Activated T-helper 2 cell treated with anti-CD3 and anti-CD28 coated beads, Interferon-gamma antibody, Interleukin-2, Interleukin-4, amounts not matched to agents 10 μg/mL and 5 μg/mL and 100 μg/mL, durations not matched to agents 14 hours and 24 hours and 36 hours (primary cell): ENCODE measurements at regions of chr4 and their contacts with region 1.

Region 1: GRCh38 chr4:159102622-159103383 is at the start of gene RAPGEF2:
- DNase-seq: peak; percentile 84
- H3K4me3 Mint-ChIP-seq: peak within 1 kb of the TSS; percentile 82
- H3K27ac Mint-ChIP-seq: peak within 1 kb of the TSS; percentile 78
- H3K4me1 Mint-ChIP-seq: peaks cover 53% of the 10 kb centered on the region
- H3K27me3 Mint-ChIP-seq: peaks cover 21% of the 10 kb centered on the region
- total RNA-seq, gene RAPGEF2: 17.0 TPM in 2 replicates

Region 2: GRCh38 chr4:158671915-158672806 is 430.6 kb before region 1 on chr4 and contains the start of gene ETFDH:
- intact Hi-C with region 1: loop called (anchors 1 kb)
- DNase-seq: peak; percentile 98
- H3K4me3 Mint-ChIP-seq: peak within 1 kb of the TSS; percentile 98
- H3K27ac Mint-ChIP-seq: peak within 1 kb of the TSS; percentile 95
- H3K4me1 Mint-ChIP-seq: peaks cover 25% of the 10 kb centered on the region
- H3K27me3 Mint-ChIP-seq: no peaks in the 10 kb centered on the region
- total RNA-seq, gene ETFDH: 21.6 and 23.8 TPM in 2 replicates

Region 3: DNA sequence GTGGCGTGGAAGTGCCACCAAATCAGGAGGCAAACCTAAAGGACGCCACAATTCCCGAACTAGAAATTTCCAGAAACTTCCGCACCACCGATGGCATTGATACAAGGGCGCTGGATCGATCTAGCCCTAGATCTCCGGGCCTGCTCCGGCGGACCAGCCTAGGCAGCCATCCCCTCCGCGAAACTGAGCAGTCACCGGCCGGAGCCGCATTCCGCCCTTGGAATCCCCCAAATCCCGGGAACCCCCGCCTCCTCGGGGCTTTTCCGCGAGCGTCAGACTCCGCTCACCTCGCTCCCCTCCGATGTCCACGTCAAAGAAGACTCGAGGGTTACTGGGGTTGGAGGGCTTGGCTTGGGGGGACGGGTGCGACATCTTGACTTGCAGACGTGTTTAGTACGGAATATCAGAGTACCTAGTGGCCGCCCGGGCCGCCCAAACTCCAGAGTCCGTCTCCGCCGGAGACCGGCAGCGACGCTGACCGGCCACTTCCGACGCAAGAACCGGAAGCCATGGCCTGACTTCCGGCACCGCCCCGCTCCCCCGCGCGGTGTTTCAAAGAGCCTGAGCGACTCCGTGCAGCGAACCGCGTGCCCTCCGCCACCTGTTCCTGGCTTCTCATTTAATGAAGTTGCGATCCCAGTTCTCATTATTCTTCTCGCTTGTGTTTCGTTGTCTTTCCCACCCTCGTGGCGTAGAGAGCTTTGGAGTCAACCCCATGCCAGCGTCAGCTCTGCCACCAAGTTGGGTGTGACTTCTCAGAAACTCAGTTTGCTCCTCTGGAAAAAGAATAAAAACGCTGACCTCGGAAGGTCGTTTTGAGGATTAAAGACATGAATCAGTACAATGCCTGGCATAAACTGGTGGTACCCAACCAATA is 379.6 kb before region 1 on chr4 and contains the start of gene PPID:
- intact Hi-C with region 1: loop called (anchors 2 kb)
- DNase-seq: peak; percentile 77
- H3K4me3 Mint-ChIP-seq: peak within 1 kb of the TSS; percentile 95
- H3K27ac Mint-ChIP-seq: peak within 1 kb of the TSS; percentile 98
- H3K4me1 Mint-ChIP-seq: peaks cover 50% of the 10 kb centered on the region
- H3K27me3 Mint-ChIP-seq: peaks cover 2% of the 10 kb centered on the region
- total RNA-seq, gene PPID: 56.8 and 58.5 TPM in 2 replicates

Region 4: GRCh38 chr4:159077702-159078495 is 24.9 kb before region 1 on chr4:
- intact Hi-C with region 1: loop called (anchors 1 kb)
- DNase-seq: no peak
- H3K4me3 Mint-ChIP-seq: no peak overlapping the region
- H3K27ac Mint-ChIP-seq: no peak overlapping the region
- H3K4me1 Mint-ChIP-seq: peaks cover 9% of the 10 kb centered on the region
- H3K27me3 Mint-ChIP-seq: peaks cover 8% of the 10 kb centered on the region

Region 5: GRCh38 chr4:159175085-159175988 is 72.5 kb after region 1 on chr4:
- intact Hi-C with region 1: loop called (anchors 5 kb)
- DNase-seq: peak; percentile 31
- H3K4me3 Mint-ChIP-seq: no peak overlapping the region
- H3K27ac Mint-ChIP-seq: no peak overlapping the region
- H3K4me1 Mint-ChIP-seq: peaks cover 31% of the 10 kb centered on the region
- H3K27me3 Mint-ChIP-seq: peaks cover 14% of the 10 kb centered on the region